Activated T-helper 2 cell treated with anti-CD3 and anti-CD28 coated beads, Interferon-gamma antibody, Interleukin-2, Interleukin-4, amounts not matched to agents 10 μg/mL and 5 μg/mL and 100 μg/mL, durations not matched to agents 14 hours and 24 hours and 36 hours (primary cell): ENCODE measurements at regions of chr19 and their contacts with region 1.

Region 1: DNA sequence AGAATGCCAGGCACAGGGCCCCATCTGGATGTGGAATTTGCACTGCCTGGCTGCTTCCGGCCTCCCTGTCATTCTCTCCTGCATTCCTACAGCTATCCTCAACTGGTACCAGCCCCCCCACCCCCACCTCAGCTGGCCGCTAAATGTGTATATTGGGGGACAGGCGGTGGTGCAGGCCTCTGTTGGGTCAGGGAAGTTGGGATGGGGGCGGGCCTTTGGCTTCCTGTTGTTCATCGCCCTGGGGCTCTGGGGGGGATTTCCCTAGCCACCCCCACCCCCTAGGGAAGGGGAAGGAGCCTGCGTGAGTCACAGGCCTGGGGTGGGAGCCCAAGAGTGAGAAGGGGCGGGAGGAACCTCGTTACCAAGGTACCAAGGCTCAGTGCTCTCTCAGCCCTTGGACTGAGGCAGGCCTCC is 10.6 kb downstream of the POU2F2 start:
- DNase-seq: peak; percentile 57
- H3K4me3 Mint-ChIP-seq: peak overlapping the region; percentile 71
- H3K27ac Mint-ChIP-seq: peak overlapping the region; percentile 95
- H3K4me1 Mint-ChIP-seq: peaks cover 49% of the 10 kb centered on the region
- H3K27me3 Mint-ChIP-seq: no peaks in the 10 kb centered on the region

Region 2: GRCh38 chr19:41893899-41894298 is 227.8 kb before region 1 on chr19:
- intact Hi-C with region 1: no loop called
- DNase-seq: no peak
- H3K4me3 Mint-ChIP-seq: no peak overlapping the region
- H3K27ac Mint-ChIP-seq: no peak overlapping the region
- H3K4me1 Mint-ChIP-seq: peaks cover 27% of the 10 kb centered on the region
- H3K27me3 Mint-ChIP-seq: no peaks in the 10 kb centered on the region

Region 3: GRCh38 chr19:42075616-42076379 is 45.9 kb before region 1 on chr19 and contains the start of gene ZNF574:
- intact Hi-C with region 1: no loop called
- DNase-seq: peak; percentile 98
- H3K4me3 Mint-ChIP-seq: peak within 1 kb of the TSS; percentile 97
- H3K27ac Mint-ChIP-seq: peak within 1 kb of the TSS; percentile 100
- H3K4me1 Mint-ChIP-seq: peaks cover 30% of the 10 kb centered on the region
- H3K27me3 Mint-ChIP-seq: peaks cover 3% of the 10 kb centered on the region
- total RNA-seq, gene ZNF574: 15.7 and 16.6 TPM in 2 replicates

Region 4: DNA sequence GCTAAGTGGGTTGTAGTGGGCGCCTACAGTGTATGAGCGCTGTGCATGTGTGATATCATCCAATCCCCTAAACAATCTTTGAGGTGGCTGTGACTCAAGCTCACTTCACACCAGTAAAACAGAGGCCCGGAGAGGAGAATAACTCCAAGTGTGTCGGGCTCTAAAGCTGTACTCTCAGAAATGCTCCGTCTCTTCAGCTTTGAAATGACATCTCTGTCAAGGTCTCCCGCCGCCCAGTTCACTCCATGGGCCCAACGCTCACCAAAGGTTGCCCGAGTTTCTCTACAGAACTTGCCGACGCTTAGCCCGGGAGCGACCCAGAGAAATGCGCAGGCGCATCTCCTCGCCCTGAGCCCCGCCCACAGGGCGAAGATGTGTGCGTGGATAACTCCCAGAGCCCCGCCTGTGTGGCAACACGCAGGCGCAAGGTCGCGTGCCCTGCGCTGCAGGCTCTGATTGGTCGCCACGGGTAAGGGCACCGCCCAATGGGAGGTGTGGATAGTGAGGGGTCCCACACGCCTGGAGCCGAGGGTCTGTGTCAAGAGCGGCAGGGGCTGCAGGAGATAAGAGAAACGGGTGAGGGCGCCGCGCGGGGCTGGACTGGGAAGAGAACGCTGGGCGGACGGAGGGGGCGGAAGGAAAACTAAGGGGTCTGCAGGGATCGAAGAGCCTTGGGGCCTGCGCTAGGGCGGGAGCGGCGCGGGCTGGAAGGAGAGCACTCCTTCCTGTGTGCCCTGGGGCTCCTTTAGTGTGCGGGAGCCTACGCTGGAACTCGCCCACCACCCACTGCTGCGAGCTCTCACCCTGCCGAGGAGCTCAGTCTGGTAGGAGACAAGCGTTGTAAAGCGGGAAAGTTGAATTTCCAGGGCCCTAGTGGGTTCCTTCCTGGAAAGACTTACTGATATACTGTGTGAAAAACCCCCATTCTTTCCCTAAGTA is 98.4 kb after region 1 on chr19 and contains the start of gene ZNF526:
- intact Hi-C with region 1: loop called (anchors 2 kb)
- DNase-seq: peak; percentile 98
- H3K4me3 Mint-ChIP-seq: peak within 1 kb of the TSS; percentile 99
- H3K27ac Mint-ChIP-seq: peak within 1 kb of the TSS; percentile 95
- H3K4me1 Mint-ChIP-seq: peaks cover 33% of the 10 kb centered on the region
- H3K27me3 Mint-ChIP-seq: no peaks in the 10 kb centered on the region
- total RNA-seq, gene ZNF526: 17.3 and 18.4 TPM in 2 replicates